ENCODE measurements at regions of chr9 and their contacts with region 1.

Region 1: DNA sequence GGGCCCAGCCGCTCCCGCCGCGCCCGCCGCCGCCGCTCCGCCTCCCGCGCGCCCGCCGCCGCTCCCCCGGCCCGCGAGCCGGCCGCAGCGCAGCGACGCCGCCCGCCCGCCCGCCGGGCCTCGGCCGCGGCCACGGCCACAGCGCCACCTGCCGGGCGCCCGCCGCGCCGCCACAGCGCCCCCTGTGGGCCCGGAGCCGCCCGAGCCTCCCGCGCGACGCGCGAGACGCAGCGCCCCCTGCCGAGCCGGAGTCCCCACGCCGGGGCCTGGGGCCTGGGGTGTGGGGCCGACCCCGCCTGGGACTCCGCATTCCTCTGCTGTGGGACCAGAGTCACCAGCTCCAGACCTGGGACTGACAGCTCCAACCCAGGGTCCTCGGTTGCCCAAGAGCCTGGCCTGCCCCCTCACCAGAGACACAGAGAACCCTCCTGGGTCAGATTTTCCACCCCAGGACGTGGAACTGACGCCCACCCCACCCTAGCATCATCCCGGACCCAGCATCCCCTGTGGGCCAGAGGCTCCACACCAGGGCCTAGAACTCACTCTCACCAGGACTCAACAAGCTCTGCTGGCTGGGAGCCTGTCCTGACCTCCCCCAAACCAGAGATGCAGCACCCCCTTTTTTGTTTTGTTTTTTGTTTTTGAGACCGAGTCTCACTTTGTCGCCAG is at the start of gene RAPGEF1:
- DNase-seq: peak; percentile 97
- ATAC-seq: peak; percentile 67
- H3K4me3 Mint-ChIP-seq: peak within 1 kb of the TSS; percentile 93
- H3K27ac Mint-ChIP-seq: peak within 1 kb of the TSS; percentile 78
- H3K4me1 Mint-ChIP-seq: peaks cover 62% of the 10 kb centered on the region
- H3K27me3 Mint-ChIP-seq: no peaks in the 10 kb centered on the region
- CTCF ChIP-seq: peak; percentile 52
- total RNA-seq, gene RAPGEF1: 278 and 318 TPM in 2 replicates

Region 2: GRCh38 chr9:131517761-131518190 is 222.3 kb before region 1 on chr9:
- CTCF ChIA-PET with region 1: no interaction called
- POLR2A ChIA-PET with region 1: no interaction called
- intact Hi-C with region 1: no loop called
- DNase-seq: no peak
- ATAC-seq: no peak
- H3K4me3 Mint-ChIP-seq: no peak overlapping the region
- H3K27ac Mint-ChIP-seq: no peak overlapping the region
- H3K4me1 Mint-ChIP-seq: peaks cover 5% of the 10 kb centered on the region
- H3K27me3 Mint-ChIP-seq: no peaks in the 10 kb centered on the region
- CTCF ChIP-seq: no peak

Region 3: DNA sequence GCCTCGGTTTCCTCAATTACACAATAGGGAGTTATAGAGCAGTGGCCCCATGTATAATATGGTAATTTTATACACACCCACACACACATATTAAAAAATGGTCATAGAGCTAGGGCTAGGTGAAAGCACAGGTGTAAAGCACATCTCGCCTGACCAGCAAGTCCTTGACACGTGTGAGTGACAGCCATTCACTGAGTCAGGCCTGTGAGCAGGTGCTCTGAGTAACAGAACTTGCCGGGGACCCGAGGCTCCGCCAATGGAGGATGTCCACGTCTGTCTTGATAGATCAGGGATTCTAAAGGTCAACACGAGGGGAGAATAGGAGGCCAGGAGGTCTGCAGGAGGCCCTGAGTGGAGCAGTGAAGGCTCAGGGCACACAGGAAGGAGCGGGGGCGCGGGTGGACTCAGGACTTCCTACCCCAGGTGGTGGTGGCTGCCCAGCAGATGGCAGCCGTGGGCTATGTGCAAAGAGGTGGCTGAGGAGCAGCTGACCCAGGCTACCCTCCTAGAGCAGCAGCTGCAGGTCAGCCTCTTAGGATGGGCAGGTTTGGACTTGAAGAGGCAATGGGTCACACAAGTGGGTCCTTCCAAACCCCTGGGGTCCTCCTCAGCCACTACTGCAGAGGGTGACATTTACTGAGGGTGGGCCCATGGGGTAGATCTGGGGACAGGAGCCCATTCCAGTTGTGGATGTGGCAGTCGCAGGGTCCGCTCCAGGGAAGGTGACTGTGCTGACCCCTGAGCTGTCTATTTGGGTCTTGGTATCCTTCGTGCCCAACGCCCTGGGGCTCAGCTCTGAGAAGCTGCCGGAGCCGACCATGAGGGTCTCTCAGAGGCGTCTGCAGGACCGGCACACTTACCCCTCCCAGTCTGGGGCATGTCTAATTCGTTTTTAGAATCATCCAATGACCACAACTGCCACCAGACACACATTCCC is 148.9 kb before region 1 on chr9:
- CTCF ChIA-PET with region 1: interaction called, 42 read pairs
- POLR2A ChIA-PET with region 1: interaction called, 7 read pairs
- intact Hi-C with region 1: loop called (anchors 1 kb)
- DNase-seq: peak; percentile 67
- ATAC-seq: peak; percentile 88
- H3K4me3 Mint-ChIP-seq: no peak overlapping the region
- H3K27ac Mint-ChIP-seq: peak overlapping the region; percentile 51
- H3K4me1 Mint-ChIP-seq: peaks cover 34% of the 10 kb centered on the region
- H3K27me3 Mint-ChIP-seq: no peaks in the 10 kb centered on the region
- CTCF ChIP-seq: no peak

Region 4: DNA sequence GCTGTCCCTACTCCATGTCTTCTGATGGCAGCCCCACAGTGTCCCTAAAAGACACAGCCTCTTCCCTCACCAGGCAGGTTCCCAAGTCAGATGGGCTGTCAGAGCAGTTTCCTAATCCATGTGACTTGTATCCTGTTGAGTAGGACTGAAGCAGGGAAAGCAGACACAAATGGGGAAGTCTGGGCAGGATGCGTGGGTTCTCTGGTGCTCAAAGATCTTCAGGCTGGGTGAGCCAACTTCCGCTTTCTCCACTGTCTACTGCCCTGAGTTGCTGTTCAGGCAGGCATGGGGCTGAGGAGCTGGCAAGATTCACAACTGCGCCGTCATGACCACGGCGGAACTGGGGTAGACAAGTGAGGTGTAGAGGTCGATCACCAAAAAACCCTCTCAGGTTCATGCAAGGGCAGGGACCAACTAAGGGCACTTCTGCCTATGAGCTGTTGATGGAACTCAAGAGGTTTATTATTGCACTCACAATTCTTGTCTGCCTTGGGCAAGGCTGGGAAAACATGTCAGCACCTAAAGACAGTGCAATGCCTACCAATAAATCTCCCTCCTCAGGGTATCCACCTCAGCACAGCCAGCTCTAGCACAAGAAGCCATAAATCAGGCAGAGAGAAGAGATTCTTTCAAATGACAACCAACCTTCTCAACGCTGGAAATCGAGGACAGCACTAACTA is 83.6 kb before region 1 on chr9:
- CTCF ChIA-PET with region 1: interaction called, 6 read pairs
- POLR2A ChIA-PET with region 1: interaction called, 6 read pairs
- intact Hi-C with region 1: loop called (anchors 1 kb)
- DNase-seq: peak; percentile 70
- ATAC-seq: peak; percentile 97
- H3K4me3 Mint-ChIP-seq: peak overlapping the region; percentile 62
- H3K27ac Mint-ChIP-seq: peak overlapping the region; percentile 93
- H3K4me1 Mint-ChIP-seq: peaks cover 93% of the 10 kb centered on the region
- H3K27me3 Mint-ChIP-seq: no peaks in the 10 kb centered on the region
- CTCF ChIP-seq: no peak

Region 5: GRCh38 chr9:131704141-131704983 is 35.8 kb before region 1 on chr9:
- CTCF ChIA-PET with region 1: interaction called, 5 read pairs
- POLR2A ChIA-PET with region 1: interaction called, 14 read pairs
- intact Hi-C with region 1: loop called (anchors 2 kb)
- DNase-seq: no peak
- ATAC-seq: no peak
- H3K4me3 Mint-ChIP-seq: peak overlapping the region; percentile 47
- H3K27ac Mint-ChIP-seq: peak overlapping the region; percentile 32
- H3K4me1 Mint-ChIP-seq: peaks cover 98% of the 10 kb centered on the region
- H3K27me3 Mint-ChIP-seq: no peaks in the 10 kb centered on the region
- CTCF ChIP-seq: no peak

Region 6: DNA sequence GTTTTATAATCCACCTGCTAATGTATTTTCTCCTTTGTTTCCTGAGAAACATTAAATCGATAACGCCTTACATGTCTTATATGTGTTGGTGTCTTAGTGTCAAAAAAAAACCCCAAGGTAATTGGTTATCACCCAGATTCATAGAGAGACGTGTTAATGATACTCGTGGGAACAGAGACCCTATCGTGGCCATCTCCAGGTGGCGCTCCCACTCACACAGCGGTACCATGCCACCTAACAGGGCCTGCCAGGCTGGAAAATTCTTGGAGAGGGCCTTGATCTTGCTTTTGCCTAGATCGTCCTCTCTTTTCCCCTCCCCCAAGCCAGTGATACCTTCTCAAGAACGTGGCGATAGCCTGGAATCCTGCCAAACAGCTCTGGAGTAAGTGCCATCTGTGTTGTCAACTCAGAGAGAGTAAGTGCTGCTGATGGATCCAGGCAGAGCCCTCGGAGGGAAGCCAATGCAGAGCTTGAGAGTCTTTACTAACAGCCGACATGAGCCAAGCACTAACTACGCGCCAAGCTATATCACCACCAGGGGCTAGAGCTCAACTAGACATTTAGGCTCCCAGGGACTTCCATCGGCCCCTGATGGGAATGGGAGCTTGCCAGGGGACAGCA is 18.0 kb before region 1 on chr9:
- CTCF ChIA-PET with region 1: interaction called, 20 read pairs
- POLR2A ChIA-PET with region 1: interaction called, 80 read pairs
- intact Hi-C with region 1: loop called (anchors 2 kb)
- DNase-seq: no peak
- ATAC-seq: no peak
- H3K4me3 Mint-ChIP-seq: no peak overlapping the region
- H3K27ac Mint-ChIP-seq: peak overlapping the region; percentile 35
- H3K4me1 Mint-ChIP-seq: peaks cover 94% of the 10 kb centered on the region
- H3K27me3 Mint-ChIP-seq: no peaks in the 10 kb centered on the region
- CTCF ChIP-seq: no peak